ENCODE measurements at regions of chr14 and their contacts with region 1.

Region 1: GRCh38 chr14:77314043-77314442 is 6.6 kb downstream of the POMT2 start:
- DNase-seq: no peak
- H3K4me3 ChIP-seq: no peak overlapping the region
- H3K27ac ChIP-seq: peak overlapping the region; percentile 73; the same call in 1 of the 2 replicates
- H3K4me1 ChIP-seq: peaks cover 11 to 25% (median 14%) of the 10 kb centered on the region in 4 experiments; a peak in 6 of 7 replicates
- H3K27me3 ChIP-seq: no peaks in the 10 kb centered on the region
- CTCF ChIP-seq: no peak
- EP300 ChIP-seq: peak in 1 of 2 experiments; percentile 50; a peak in 1 of 3 replicates
- POLR2A ChIP-seq: no peak
- RAD21 ChIP-seq: peak in 1 of 2 experiments; percentile 16; a peak in 2 of 4 replicates

Region 2: GRCh38 chr14:77139540-77140358 is 174.3 kb before region 1 on chr14:
- CTCF ChIA-PET with region 1: interaction called, 17 read pairs
- POLR2A ChIA-PET with region 1: no interaction called
- DNase-seq: peak in 1 of 2 experiments; percentile 93
- H3K4me3 ChIP-seq: peak overlapping the region; percentile 69 to 79 (median 78)
- H3K27ac ChIP-seq: no peak overlapping the region
- H3K4me1 ChIP-seq: peaks cover 9 to 37% (median 22%) of the 10 kb centered on the region in 4 experiments
- H3K27me3 ChIP-seq: peaks cover 0 to 4% (median 2%) of the 10 kb centered on the region in 4 experiments; a peak in 3 of 7 replicates
- CTCF ChIP-seq: peak; percentile 73 to 90 (median 79)
- EP300 ChIP-seq: peak in 1 of 2 experiments; percentile 51; a peak in 1 of 3 replicates
- POLR2A ChIP-seq: no peak
- RAD21 ChIP-seq: peak; percentile 76 to 77

Region 3: GRCh38 chr14:77245820-77246219 is 68.2 kb before region 1 on chr14:
- CTCF ChIA-PET with region 1: interaction called, 12 read pairs
- POLR2A ChIA-PET with region 1: no interaction called
- DNase-seq: no peak
- H3K4me3 ChIP-seq: no peak overlapping the region
- H3K27ac ChIP-seq: no peak overlapping the region
- H3K4me1 ChIP-seq: no peaks in the 10 kb centered on the region; a peak in 1 of 7 replicates
- H3K27me3 ChIP-seq: no peaks in the 10 kb centered on the region
- CTCF ChIP-seq: peak in 2 of 3 experiments; percentile 50 to 64; a peak in 3 of 4 replicates
- EP300 ChIP-seq: no peak
- POLR2A ChIP-seq: no peak
- RAD21 ChIP-seq: peak; percentile 48 to 62; a peak in 3 of 4 replicates

Region 4: GRCh38 chr14:77301103-77301502 is 12.9 kb before region 1 on chr14:
- CTCF ChIA-PET with region 1: interaction called, 353 read pairs
- POLR2A ChIA-PET with region 1: interaction called, 3 read pairs
- DNase-seq: peak; percentile 83 to 90
- H3K4me3 ChIP-seq: no peak overlapping the region
- H3K27ac ChIP-seq: no peak overlapping the region
- H3K4me1 ChIP-seq: peaks cover 0 to 5% (median 0%) of the 10 kb centered on the region in 4 experiments; a peak in 1 of 7 replicates
- H3K27me3 ChIP-seq: no peaks in the 10 kb centered on the region
- CTCF ChIP-seq: peak; percentile 81 to 98 (median 91)
- EP300 ChIP-seq: no peak
- POLR2A ChIP-seq: no peak
- RAD21 ChIP-seq: peak; percentile 87 to 95

Region 5: GRCh38 chr14:77339407-77339806 is 25.4 kb after region 1 on chr14:
- CTCF ChIA-PET with region 1: interaction called, 15 read pairs
- POLR2A ChIA-PET with region 1: interaction called, 5 read pairs
- DNase-seq: no peak
- H3K4me3 ChIP-seq: no peak overlapping the region
- H3K27ac ChIP-seq: no peak overlapping the region
- H3K4me1 ChIP-seq: peaks cover 5 to 19% (median 10%) of the 10 kb centered on the region in 4 experiments
- H3K27me3 ChIP-seq: no peaks in the 10 kb centered on the region
- CTCF ChIP-seq: no peak
- EP300 ChIP-seq: no peak
- POLR2A ChIP-seq: no peak
- RAD21 ChIP-seq: no peak